B cell (primary cell): ENCODE measurements at regions of chr11 and their contacts with region 1.

Region 1: DNA sequence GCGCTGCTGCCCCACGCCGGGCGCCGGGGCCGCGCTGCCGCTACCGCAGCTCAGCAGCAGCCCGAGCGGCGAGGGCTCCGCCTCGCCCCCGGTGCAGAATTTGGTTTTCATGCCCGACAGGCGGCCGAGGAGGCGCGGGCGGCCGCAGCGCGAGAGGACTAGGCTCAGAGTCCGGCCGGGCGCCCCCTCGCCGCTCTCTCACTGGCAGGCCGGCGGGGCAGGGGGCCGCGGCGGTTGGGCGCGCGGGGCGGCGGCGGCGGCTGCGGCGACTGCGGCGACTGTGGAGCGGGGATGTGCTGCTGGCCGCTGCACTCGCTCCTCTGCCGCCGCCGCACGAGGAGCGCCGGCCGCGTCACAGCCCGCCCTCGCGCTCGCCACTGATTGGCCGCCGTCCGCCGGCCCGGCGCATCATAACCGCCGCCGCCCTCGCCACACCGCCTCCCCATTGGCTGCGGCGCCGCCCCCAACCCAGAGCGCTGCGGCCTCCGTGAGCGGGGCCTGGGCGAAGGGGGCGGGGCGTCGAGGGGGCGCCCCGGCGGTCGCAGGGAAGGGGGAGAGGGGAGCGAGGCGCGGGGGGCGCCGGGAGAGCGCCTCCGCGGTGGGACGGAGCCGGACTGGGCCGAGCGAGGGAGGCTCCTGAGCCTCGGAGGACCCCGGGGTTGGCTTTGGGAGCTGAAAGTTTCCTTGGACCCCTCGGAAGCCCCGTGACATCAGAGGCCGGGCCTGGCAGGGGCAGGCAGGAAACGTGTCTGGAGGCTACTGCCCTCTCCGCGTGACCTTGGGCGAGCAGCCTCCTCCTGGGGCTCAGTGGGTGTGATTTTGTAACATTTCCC is at the start of gene CHKA:
- DNase-seq: peak; percentile 94
- ATAC-seq: peak; percentile 93
- H3K4me3 ChIP-seq: peak within 1 kb of the TSS; percentile 65 to 78 (median 66)
- H3K4me3 Mint-ChIP-seq: peak within 1 kb of the TSS; percentile 95
- H3K27ac ChIP-seq: peak within 1 kb of the TSS; percentile 82 to 86
- H3K27ac Mint-ChIP-seq: peak within 1 kb of the TSS; percentile 95
- H3K4me1 ChIP-seq: peaks cover 21 to 29% of the 10 kb centered on the region in 2 donors
- H3K4me1 Mint-ChIP-seq: peaks cover 27% of the 10 kb centered on the region
- H3K27me3 ChIP-seq: no peaks in the 10 kb centered on the region
- H3K27me3 Mint-ChIP-seq: no peaks in the 10 kb centered on the region
- CTCF ChIP-seq: no peak
- total RNA-seq, gene CHKA: 20.6 and 24.9 TPM in 2 replicates

Region 2: DNA sequence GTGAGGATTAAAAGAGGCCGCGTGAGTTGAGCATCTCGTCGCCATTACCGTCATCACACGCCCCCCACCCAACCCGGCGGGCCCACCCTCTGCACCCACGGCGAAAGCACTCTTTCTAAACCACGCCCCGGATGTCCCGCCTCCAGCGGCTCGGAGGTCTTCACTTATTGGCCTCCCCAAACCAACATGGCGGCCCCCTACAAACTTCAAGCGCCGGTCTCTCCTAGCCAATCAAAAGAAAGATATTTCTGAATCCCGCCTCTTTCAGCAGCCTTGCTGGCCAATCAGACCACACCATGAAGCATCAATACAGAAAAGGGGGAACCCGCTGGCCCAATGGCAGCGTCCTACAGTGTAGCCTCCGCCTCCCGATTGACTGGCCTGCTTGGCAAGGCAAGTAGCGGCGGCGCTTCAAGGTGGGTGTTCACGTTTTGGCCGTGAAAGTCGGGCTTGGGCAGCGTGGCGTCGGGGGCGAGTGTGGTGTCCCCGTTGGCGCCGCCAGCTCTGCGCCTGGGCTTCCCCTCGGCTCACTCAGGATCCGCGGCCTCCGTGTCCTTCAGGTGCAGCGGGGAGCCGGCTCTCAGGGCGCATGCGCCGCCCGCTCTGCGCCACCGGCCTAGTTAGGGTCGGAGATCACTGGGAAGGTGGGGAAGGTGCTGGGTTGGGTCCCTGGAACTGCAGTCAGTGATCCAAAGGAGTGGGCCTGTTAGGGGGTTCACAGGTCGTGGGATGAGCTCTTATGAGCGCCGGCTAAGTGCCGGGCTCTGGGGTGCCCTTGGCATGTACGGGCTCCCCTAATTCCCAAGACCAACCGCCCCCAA is 90.8 kb before region 1 on chr11 and contains the start of gene NDUFS8:
- CTCF ChIA-PET with region 1: no interaction called
- POLR2A ChIA-PET with region 1: no interaction called
- intact Hi-C with region 1: loop called (anchors 1 kb)
- DNase-seq: peak; percentile 98
- ATAC-seq: peak; percentile 96
- H3K4me3 ChIP-seq: peak within 1 kb of the TSS; percentile 56 to 90 (median 81)
- H3K4me3 Mint-ChIP-seq: peak within 1 kb of the TSS; percentile 100
- H3K27ac ChIP-seq: peak within 1 kb of the TSS; percentile 57 to 78
- H3K27ac Mint-ChIP-seq: peak within 1 kb of the TSS; percentile 94
- H3K4me1 ChIP-seq: peaks cover 12 to 20% of the 10 kb centered on the region in 2 donors
- H3K4me1 Mint-ChIP-seq: peaks cover 21% of the 10 kb centered on the region
- H3K27me3 ChIP-seq: no peaks in the 10 kb centered on the region
- H3K27me3 Mint-ChIP-seq: no peaks in the 10 kb centered on the region
- CTCF ChIP-seq: no peak
- total RNA-seq, gene NDUFS8: 73.9 and 75.2 TPM in 2 replicates

Region 3: DNA sequence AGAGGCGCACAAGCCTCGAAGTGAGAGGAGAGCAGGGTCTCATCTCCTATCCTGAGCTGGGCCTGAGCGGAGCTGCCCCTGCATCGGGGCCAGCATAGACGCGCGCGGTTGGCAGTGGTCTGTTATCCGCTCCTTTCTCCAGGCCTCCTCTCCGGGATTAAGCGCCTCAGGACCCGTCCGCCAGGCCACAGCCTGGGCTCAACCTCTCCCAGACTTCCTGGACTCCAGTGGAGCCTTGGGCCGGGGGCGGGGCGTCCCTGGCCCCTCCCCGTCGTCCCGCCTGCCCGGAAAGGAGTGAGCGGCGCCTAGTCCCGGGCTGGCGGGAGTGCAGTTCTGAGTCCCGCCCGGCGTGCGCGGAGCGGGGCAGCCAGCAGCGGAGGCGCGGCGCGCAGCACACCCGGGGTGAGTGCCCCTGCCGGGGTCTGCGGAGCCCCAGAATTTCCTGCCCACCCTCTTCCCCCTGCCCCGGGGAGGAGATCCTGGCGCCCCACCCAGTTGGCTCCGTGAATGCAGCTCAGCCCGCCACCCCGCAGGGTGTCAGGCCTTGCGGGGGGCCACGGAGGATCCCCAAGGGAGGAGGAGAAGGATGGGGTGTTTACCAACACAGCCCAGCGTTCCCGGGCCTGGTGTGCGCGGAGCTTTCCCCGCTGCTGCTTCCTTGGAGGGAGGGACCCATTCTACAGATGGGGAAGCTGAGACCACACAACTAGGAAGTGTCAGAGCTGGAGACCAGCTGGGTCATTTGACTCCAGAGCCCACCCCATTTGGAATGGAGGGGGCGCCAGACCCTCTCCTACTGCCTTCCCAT is 82.4 kb before region 1 on chr11 and contains the start of gene TCIRG1:
- CTCF ChIA-PET with region 1: no interaction called
- POLR2A ChIA-PET with region 1: no interaction called
- intact Hi-C with region 1: loop called (anchors 1 kb)
- DNase-seq: peak; percentile 62
- ATAC-seq: peak; percentile 45
- H3K4me3 ChIP-seq: peak within 1 kb of the TSS; percentile 61 to 86 (median 71)
- H3K4me3 Mint-ChIP-seq: peak within 1 kb of the TSS; percentile 89
- H3K27ac ChIP-seq: peak within 1 kb of the TSS; percentile 83 to 85
- H3K27ac Mint-ChIP-seq: peak within 1 kb of the TSS; percentile 96
- H3K4me1 ChIP-seq: peaks cover 24 to 51% of the 10 kb centered on the region in 2 donors
- H3K4me1 Mint-ChIP-seq: peaks cover 30% of the 10 kb centered on the region
- H3K27me3 ChIP-seq: no peaks in the 10 kb centered on the region
- H3K27me3 Mint-ChIP-seq: no peaks in the 10 kb centered on the region
- CTCF ChIP-seq: no peak
- total RNA-seq, gene TCIRG1: 305 and 306 TPM in 2 replicates